Spleen (tissue), 13 donors: ENCODE measurements at regions of chr3 and their contacts with region 1.

Region 1: DNA sequence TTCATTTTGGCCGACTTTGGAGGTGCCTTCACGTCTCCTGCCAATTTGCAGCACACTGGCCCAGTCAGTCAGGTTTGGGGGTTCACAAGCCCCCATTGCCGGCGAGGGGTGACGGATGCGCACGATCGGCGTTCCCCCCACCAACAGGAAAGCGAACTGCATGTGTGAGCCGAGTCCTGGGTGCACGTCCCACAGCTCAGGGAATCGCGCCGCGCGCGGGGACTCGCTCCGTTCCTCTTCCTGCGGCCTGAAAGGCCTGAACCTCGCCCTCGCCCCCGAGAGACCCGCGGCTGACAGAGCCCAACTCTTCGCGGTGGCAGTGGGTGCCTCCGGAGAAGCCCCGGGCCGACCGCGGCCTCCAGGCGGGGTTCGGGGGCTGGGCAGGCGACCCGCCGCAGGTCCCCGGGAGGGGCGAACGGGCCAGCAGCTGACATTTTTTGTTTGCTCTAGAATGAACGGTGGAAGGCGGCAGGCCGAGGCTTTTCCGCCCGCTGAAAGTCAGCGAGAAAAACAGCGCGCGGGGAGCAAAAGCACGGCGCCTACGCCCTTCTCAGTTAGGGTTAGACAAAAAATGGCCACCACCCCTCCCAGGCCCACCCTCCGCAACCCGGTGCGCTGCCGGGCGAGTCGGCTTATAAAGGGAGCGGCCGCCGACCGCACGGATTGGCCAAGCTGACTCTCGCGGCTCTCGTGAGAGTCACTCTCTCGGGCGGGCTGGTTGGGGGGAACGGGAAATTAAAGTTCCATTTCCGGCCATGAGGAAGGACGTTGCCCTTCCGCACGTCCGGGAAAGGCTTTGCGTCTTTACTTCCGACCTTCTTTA is at the start of gene TERC:
- DNase-seq: peak; percentile 97
- H3K4me3 ChIP-seq: peak within 1 kb of the TSS; percentile 52 to 84 (median 66)
- H3K27ac ChIP-seq: peak within 1 kb of the TSS; percentile 95 to 99 (median 98)
- H3K4me1 ChIP-seq: peaks cover 0 to 28% (median 21%) of the 10 kb centered on the region in 6 donors
- H3K27me3 ChIP-seq: no peaks in the 10 kb centered on the region
- CTCF ChIP-seq: peak in 4 of 11 experiments; percentile 3 to 26 (median 24)
- POLR2A ChIP-seq: peak in 2 of 3 donors; percentile 94 to 96
- total RNA-seq, gene TERC: 1.5 to 105 (median 8.2) TPM

Region 2: DNA sequence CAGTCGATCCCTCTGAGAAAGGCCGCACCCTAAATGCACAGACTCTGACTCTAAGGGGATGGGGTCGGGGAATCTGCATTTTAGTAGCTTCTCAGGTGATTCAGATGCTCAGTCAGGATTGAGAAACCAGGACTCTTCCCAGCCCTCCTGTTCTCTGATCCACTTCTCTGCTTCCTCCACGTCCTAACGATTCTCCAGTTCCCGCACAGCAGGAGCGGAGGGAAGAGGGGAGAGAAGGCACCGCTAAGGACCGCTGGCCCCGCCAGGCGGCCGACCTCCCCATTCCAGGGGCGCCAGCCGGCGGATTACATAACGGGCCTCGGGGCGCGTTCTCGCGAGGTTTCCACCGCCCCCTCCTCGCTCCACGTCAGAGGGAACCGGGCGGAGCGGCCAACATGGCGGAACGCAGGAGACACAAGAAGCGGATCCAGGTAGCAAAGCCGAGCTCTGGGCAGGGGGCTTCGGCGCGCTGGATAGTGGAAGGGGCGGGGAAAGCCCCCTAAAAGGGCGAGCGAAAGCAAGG is 201.8 kb after region 1 on chr3 and contains the start of gene SEC62:
- intact Hi-C with region 1: loop called (anchors 10 kb)
- DNase-seq: peak; percentile 99
- H3K4me3 ChIP-seq: peak within 1 kb of the TSS; percentile 70 to 87 (median 72)
- H3K27ac ChIP-seq: peak within 1 kb of the TSS; percentile 96 to 98 (median 98)
- H3K4me1 ChIP-seq: peaks cover 40 to 75% (median 52%) of the 10 kb centered on the region in 6 donors
- H3K27me3 ChIP-seq: no peaks in the 10 kb centered on the region
- CTCF ChIP-seq: peak in 9 of 11 experiments; percentile 28 to 71 (median 54)
- POLR2A ChIP-seq: peak; percentile 36 to 89 (median 83)
- total RNA-seq, gene SEC62: 56.8 to 178 (median 132) TPM

Region 3: GRCh38 chr3:170220871-170221270 is 456.2 kb after region 1 on chr3:
- intact Hi-C with region 1: no loop called
- DNase-seq: no peak
- H3K4me3 ChIP-seq: no peak overlapping the region
- H3K27ac ChIP-seq: no peak overlapping the region
- H3K4me1 ChIP-seq: peaks cover 0 to 36% (median 19%) of the 10 kb centered on the region in 6 donors
- H3K27me3 ChIP-seq: no peaks in the 10 kb centered on the region
- CTCF ChIP-seq: no peak
- POLR2A ChIP-seq: no peak